ENCODE measurements at regions of chr9 and their contacts with region 1.

Region 1: DNA sequence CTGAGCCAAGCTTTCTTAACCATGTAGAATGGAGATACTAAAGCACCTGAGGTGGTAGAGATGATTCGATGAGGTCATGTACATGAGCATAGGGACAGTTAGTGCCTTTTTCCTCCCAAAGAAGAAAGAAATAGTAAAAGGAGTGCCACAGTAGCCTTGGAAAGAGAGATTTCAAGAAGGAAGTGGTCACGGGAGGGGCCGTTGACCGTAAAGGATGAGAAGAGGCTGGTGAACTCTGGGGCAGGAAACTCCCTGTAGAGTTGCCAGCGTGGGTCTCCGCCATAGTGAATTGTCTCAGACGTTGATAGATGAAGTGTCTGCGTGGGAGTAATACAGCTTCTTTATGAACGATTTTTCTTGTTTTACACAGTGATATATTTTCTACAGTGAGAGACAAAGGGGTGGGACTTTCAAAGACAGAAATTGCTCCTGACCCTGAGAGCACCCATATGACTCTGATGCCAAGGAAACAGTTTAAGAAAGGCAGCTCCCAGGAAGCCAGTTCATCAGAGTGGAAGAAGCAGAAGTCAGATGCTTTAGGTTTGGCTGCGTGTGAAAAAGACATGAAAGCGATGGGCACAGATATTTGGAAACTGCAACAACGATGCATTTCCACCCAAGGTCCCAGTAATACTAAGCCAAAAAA is 41.3 kb downstream of the UGCG start:
- DNase-seq: peak; percentile 88
- H3K4me3 Mint-ChIP-seq: peak overlapping the region; percentile 53
- H3K27ac Mint-ChIP-seq: peak overlapping the region; percentile 83
- H3K4me1 Mint-ChIP-seq: peaks cover 23% of the 10 kb centered on the region
- H3K27me3 Mint-ChIP-seq: no peaks in the 10 kb centered on the region

Region 2: DNA sequence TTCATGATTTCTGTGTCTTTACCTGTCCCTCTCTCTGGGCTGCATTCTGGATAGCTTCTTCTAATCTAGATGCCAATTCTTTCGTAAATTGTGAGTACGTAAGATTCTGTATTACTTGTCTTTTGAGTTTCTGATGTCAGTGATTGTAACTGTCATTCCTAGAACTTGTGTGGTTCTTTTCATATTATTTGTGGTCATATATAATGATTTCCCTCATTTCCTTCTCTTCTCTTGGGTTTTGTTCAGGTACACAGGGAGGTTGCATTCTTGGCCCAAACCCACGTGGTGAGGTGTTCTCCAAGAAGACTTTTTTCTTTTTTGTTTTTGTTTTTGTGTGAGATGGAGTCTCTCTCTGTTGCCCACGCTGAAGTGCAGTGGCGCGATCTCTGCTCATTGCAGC is 27.5 kb before region 1 on chr9:
- CTCF ChIA-PET with region 1: no interaction called
- POLR2A ChIA-PET with region 1: interaction called, 10 read pairs
- intact Hi-C with region 1: loop called (anchors 1 kb)
- DNase-seq: peak; percentile 35
- H3K4me3 Mint-ChIP-seq: no peak overlapping the region
- H3K27ac Mint-ChIP-seq: no peak overlapping the region
- H3K4me1 Mint-ChIP-seq: peaks cover 85% of the 10 kb centered on the region
- H3K27me3 Mint-ChIP-seq: no peaks in the 10 kb centered on the region

Region 3: DNA sequence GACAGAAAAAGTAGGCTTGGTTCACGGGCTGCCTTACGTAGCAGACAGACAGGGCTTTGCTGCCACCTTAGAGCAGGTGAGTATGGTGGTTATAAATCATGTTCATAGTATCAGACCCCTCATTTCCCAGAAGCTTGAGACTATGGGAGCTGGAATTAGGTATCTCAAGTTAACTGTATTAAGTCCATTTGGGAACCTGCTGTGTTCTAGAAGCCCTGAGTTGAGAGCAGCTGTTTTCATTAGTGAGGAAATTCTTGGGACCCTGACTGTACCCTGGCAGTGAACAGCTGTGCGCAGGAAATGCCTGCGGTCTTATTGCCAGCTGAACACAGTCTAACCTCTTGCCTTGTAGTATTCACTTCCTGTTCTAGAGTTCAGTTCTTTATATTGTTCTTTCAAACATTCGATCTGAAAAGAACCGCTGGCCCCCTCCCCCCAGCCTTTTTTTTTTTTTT is 11.5 kb before region 1 on chr9:
- CTCF ChIA-PET with region 1: no interaction called
- POLR2A ChIA-PET with region 1: interaction called, 4 read pairs
- intact Hi-C with region 1: loop called (anchors 1 kb)
- DNase-seq: peak; percentile 72
- H3K4me3 Mint-ChIP-seq: no peak overlapping the region
- H3K27ac Mint-ChIP-seq: peak overlapping the region; percentile 51
- H3K4me1 Mint-ChIP-seq: peaks cover 30% of the 10 kb centered on the region
- H3K27me3 Mint-ChIP-seq: no peaks in the 10 kb centered on the region

Region 4: GRCh38 chr9:111957856-111958652 is 20.1 kb after region 1 on chr9:
- CTCF ChIA-PET with region 1: no interaction called
- POLR2A ChIA-PET with region 1: no interaction called
- intact Hi-C with region 1: loop called (anchors 1 kb)
- DNase-seq: no peak
- H3K4me3 Mint-ChIP-seq: no peak overlapping the region
- H3K27ac Mint-ChIP-seq: no peak overlapping the region
- H3K4me1 Mint-ChIP-seq: peaks cover 14% of the 10 kb centered on the region
- H3K27me3 Mint-ChIP-seq: peaks cover 6% of the 10 kb centered on the region

Region 5: DNA sequence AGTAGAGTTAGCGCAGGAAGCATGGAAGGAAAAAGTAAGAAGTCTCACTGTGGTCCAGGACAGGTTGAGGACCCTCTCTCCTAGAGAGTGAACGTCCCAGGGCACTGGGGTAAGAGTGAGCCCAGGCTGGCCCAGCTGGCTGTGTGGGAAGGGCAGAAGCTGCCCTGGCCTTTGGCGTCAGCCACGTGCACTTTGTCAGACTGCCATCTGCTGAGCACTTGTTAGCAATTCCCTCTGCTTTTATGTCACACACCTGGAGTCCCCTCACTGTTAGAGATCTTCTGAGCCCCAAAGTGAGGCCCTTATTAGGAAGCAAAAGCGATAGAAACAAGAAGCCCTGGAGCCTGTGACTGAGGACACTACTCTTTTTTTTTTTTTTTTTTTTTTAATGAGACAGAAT is 37.8 kb after region 1 on chr9:
- CTCF ChIA-PET with region 1: no interaction called
- POLR2A ChIA-PET with region 1: no interaction called
- intact Hi-C with region 1: no loop called
- DNase-seq: peak; percentile 37
- H3K4me3 Mint-ChIP-seq: no peak overlapping the region
- H3K27ac Mint-ChIP-seq: no peak overlapping the region
- H3K4me1 Mint-ChIP-seq: no peaks in the 10 kb centered on the region
- H3K27me3 Mint-ChIP-seq: no peaks in the 10 kb centered on the region

Measured in activated CD4-positive, alpha-beta memory T cell treated with anti-CD3 and anti-CD28 coated beads for 36 hours (primary cell).